Naive thymus-derived CD4-positive, alpha-beta T cell (primary cell): ENCODE measurements at regions of chr1 and their contacts with region 1.

Region 1: GRCh38 chr1:193629875-193630274 is 443.5 kb upstream of the B3GALT2 start:
- DNase-seq: no peak
- ATAC-seq: no peak
- H3K4me3 ChIP-seq: no peak overlapping the region
- H3K4me3 Mint-ChIP-seq: no peak overlapping the region
- H3K27ac ChIP-seq: no peak overlapping the region
- H3K27ac Mint-ChIP-seq: no peak overlapping the region
- H3K4me1 ChIP-seq: no peaks in the 10 kb centered on the region
- H3K4me1 Mint-ChIP-seq: peaks cover 5 to 14% (median 10%) of the 10 kb centered on the region in 7 donors
- H3K27me3 ChIP-seq: no peaks in the 10 kb centered on the region
- H3K27me3 Mint-ChIP-seq: peaks cover 0 to 9% (median 0%) of the 10 kb centered on the region in 5 donors

Region 2: GRCh38 chr1:193649583-193649982 is 19.7 kb after region 1 on chr1:
- CTCF ChIA-PET with region 1: no interaction called
- POLR2A ChIA-PET with region 1: interaction called, 3 read pairs
- intact Hi-C with region 1: loop called in 1 of 2 experiments (anchors 2 kb)
- DNase-seq: no peak
- ATAC-seq: no peak
- H3K4me3 ChIP-seq: no peak overlapping the region
- H3K4me3 Mint-ChIP-seq: no peak overlapping the region
- H3K27ac ChIP-seq: no peak overlapping the region
- H3K27ac Mint-ChIP-seq: no peak overlapping the region
- H3K4me1 ChIP-seq: no peaks in the 10 kb centered on the region
- H3K4me1 Mint-ChIP-seq: peaks cover 0 to 6% (median 0%) of the 10 kb centered on the region in 7 donors
- H3K27me3 ChIP-seq: no peaks in the 10 kb centered on the region
- H3K27me3 Mint-ChIP-seq: no peaks in the 10 kb centered on the region

Region 3: DNA sequence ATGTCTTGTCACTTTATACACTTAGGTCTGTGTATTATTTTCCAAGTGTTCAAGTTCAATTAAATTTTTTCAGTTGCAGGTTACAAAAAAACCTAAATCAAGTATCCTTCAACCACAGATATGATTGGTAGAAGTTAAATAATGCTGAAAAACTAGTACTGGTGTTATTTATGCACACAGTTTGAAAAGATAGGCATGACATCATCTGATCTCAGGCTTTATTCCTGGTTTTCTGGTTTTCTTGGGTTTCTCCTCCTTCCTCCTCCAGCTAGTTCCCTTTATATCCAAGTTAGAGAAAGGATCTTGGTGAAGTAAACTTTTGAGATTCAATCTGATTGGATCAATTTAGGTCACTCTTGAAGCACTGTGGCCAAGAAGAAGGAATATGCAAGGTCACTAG is 757.7 kb after region 1 on chr1:
- CTCF ChIA-PET with region 1: no interaction called
- POLR2A ChIA-PET with region 1: no interaction called
- intact Hi-C with region 1: no loop called
- DNase-seq: no peak
- ATAC-seq: no peak
- H3K4me3 ChIP-seq: no peak overlapping the region
- H3K4me3 Mint-ChIP-seq: no peak overlapping the region
- H3K27ac ChIP-seq: no peak overlapping the region
- H3K27ac Mint-ChIP-seq: no peak overlapping the region
- H3K4me1 ChIP-seq: no peaks in the 10 kb centered on the region
- H3K4me1 Mint-ChIP-seq: peaks cover 0 to 1% (median 0%) of the 10 kb centered on the region in 7 donors
- H3K27me3 ChIP-seq: no peaks in the 10 kb centered on the region
- H3K27me3 Mint-ChIP-seq: no peaks in the 10 kb centered on the region